ENCODE measurements at regions of chr2 and their contacts with region 1.

Region 1: DNA sequence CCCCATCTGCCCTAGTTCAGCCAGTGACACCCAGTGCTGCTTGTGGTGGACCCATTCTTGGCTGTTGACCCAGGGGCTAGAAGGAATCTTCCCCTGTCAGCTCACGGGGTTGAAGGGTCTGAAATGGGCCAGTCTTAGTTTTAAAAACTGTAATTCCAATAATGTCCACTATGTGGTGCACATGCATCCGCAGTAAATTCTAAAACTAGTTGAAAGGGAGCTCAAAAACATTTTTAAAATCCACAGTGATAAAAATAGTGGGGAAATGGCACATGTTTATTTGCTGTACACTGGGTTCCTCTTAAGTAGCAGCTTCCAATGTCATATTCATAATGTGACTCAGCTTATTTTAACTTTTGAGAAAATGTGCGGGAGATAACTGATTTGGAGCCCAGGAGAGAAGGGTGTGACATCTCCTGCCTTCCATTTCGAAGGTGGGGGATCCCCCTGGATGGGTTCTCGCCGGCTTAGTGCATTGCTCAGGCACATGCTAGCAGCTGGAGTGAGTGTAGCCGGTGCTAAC is 32.8 kb downstream of the GRHL1 start:
- DNase-seq: peak; percentile 46 to 90
- ATAC-seq: peak; percentile 63 to 89
- H3K4me3 ChIP-seq: no peak overlapping the region
- H3K27ac ChIP-seq: no peak overlapping the region
- H3K4me1 ChIP-seq: 0 out of 3 replicates have a peak, but pooled peaks cover 3% of the 10 kb centered on the region
- CTCF ChIP-seq: peak; percentile 77
- EP300 ChIP-seq: no peak
- POLR2A ChIP-seq: no peak
- RAD21 ChIP-seq: peak; percentile 61 to 66

Region 2: DNA sequence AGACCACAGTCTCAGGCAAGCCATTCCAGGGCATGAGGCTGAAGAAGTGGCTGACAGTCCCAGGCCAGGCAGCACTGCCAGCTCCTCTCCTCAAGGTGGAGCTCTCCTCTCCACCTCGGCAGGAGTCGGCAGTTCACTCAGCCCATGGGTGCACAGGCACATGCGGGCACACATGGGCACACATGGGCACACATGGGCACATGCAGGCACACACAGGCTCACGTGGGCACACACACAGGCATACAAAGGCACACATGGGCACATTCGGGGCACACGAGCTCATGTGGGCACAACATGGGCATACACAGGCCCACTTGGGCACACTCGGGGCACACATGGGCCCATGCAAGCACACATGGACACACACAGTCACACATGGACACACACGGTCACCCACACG is 206.3 kb before region 1 on chr2:
- CTCF ChIA-PET with region 1: no interaction called
- POLR2A ChIA-PET with region 1: no interaction called
- DNase-seq: peak; percentile 45 to 56
- ATAC-seq: peak; percentile 61 to 85; a peak in 5 of 6 replicates
- H3K4me3 ChIP-seq: no peak overlapping the region
- H3K27ac ChIP-seq: no peak overlapping the region
- H3K4me1 ChIP-seq: 0 out of 3 replicates have a peak, but pooled peaks cover 4% of the 10 kb centered on the region
- CTCF ChIP-seq: peak; percentile 21; the same call in 1 of the 3 replicates
- EP300 ChIP-seq: no peak
- POLR2A ChIP-seq: no peak
- RAD21 ChIP-seq: peak; percentile 29 to 31; a peak in 2 of 5 replicates

Region 3: GRCh38 chr2:9961013-9961412 is 23.3 kb before region 1 on chr2:
- CTCF ChIA-PET with region 1: interaction called, 14 read pairs
- POLR2A ChIA-PET with region 1: no interaction called
- DNase-seq: no peak
- ATAC-seq: no peak; a peak in 1 of 6 replicates
- H3K4me3 ChIP-seq: no peak overlapping the region
- H3K27ac ChIP-seq: no peak overlapping the region
- H3K4me1 ChIP-seq: no peaks in the 10 kb centered on the region
- CTCF ChIP-seq: no peak
- EP300 ChIP-seq: no peak
- POLR2A ChIP-seq: no peak
- RAD21 ChIP-seq: no peak

Region 4: DNA sequence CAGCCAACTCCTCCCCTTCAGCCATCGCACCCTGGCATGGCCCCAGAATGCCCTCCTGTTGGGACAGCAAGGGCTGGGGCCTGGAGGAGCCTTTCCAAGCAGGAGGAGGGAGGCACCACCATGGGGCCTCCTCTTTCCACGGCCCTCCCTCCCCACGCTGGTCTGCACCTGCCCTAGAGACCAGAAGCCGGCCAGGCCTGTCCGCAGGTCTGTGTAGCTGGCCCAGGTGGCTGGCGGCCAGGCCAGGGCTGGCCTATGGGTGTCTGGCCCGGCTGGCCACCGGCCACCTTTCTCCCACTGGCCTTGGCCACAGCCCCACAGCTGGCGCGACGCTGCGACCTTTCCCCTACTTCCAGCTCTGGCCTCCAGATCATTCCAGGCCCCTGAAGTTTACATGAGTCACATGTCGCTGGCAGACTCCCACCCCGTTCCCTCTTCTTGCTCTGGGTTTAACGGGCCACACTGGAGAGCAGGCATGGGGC is 25.6 kb after region 1 on chr2:
- CTCF ChIA-PET with region 1: interaction called, 65 read pairs
- POLR2A ChIA-PET with region 1: no interaction called
- DNase-seq: no peak
- ATAC-seq: peak in 1 of 2 experiments; percentile 17; a peak in 3 of 6 replicates
- H3K4me3 ChIP-seq: no peak overlapping the region
- H3K27ac ChIP-seq: no peak overlapping the region
- H3K4me1 ChIP-seq: no peaks in the 10 kb centered on the region
- CTCF ChIP-seq: no peak
- EP300 ChIP-seq: no peak
- POLR2A ChIP-seq: no peak
- RAD21 ChIP-seq: no peak

Region 5: GRCh38 chr2:10036095-10036884 is 52.0 kb after region 1 on chr2:
- CTCF ChIA-PET with region 1: interaction called, 117 read pairs
- POLR2A ChIA-PET with region 1: interaction called, 3 read pairs
- DNase-seq: peak; percentile 84 to 95
- ATAC-seq: peak; percentile 88 to 94
- H3K4me3 ChIP-seq: no peak overlapping the region
- H3K27ac ChIP-seq: peak overlapping the region; percentile 53 to 83
- H3K4me1 ChIP-seq: peaks cover 16% of the 10 kb centered on the region
- CTCF ChIP-seq: peak; percentile 62
- EP300 ChIP-seq: no peak
- POLR2A ChIP-seq: no peak
- RAD21 ChIP-seq: peak; percentile 43; a peak in 3 of 5 replicates

Region 6: GRCh38 chr2:10204326-10205161 is 220.3 kb after region 1 on chr2:
- CTCF ChIA-PET with region 1: no interaction called
- POLR2A ChIA-PET with region 1: no interaction called
- DNase-seq: no peak
- ATAC-seq: no peak; a peak in 1 of 6 replicates
- H3K4me3 ChIP-seq: no peak overlapping the region
- H3K27ac ChIP-seq: no peak overlapping the region
- H3K4me1 ChIP-seq: no peaks in the 10 kb centered on the region
- CTCF ChIP-seq: no peak
- EP300 ChIP-seq: no peak
- POLR2A ChIP-seq: no peak
- RAD21 ChIP-seq: no peak